CD4-positive, alpha-beta T cell (primary cell): ENCODE measurements at regions of chr1 and their contacts with region 1.

Region 1: GRCh38 chr1:84936116-84936810 is 43.3 kb upstream of the LPAR3 start:
- DNase-seq: peak in 9 of 14 experiments; percentile 6 to 80 (median 22)
- ATAC-seq: peak; percentile 79
- H3K4me3 ChIP-seq: no peak overlapping the region
- H3K4me3 Mint-ChIP-seq: no peak overlapping the region
- H3K27ac ChIP-seq: no peak overlapping the region
- H3K27ac Mint-ChIP-seq: no peak overlapping the region
- H3K4me1 ChIP-seq: peaks cover 3% of the 10 kb centered on the region
- H3K4me1 Mint-ChIP-seq: no peaks in the 10 kb centered on the region
- H3K27me3 ChIP-seq: no peaks in the 10 kb centered on the region
- H3K27me3 Mint-ChIP-seq: no peaks in the 10 kb centered on the region
- CTCF ChIP-seq: peak; percentile 97

Region 2: GRCh38 chr1:83931658-83932253 is 1004.5 kb before region 1 on chr1:
- CTCF ChIA-PET with region 1: no interaction called
- POLR2A ChIA-PET with region 1: no interaction called
- intact Hi-C with region 1: loop called (anchors 5 kb)
- DNase-seq: peak in 5 of 14 experiments; percentile 1 to 64 (median 64)
- ATAC-seq: peak; percentile 76
- H3K4me3 ChIP-seq: no peak overlapping the region
- H3K4me3 Mint-ChIP-seq: no peak overlapping the region
- H3K27ac ChIP-seq: no peak overlapping the region
- H3K27ac Mint-ChIP-seq: no peak overlapping the region
- H3K4me1 ChIP-seq: no peaks in the 10 kb centered on the region
- H3K4me1 Mint-ChIP-seq: no peaks in the 10 kb centered on the region
- H3K27me3 ChIP-seq: no peaks in the 10 kb centered on the region
- H3K27me3 Mint-ChIP-seq: peaks cover 4% of the 10 kb centered on the region
- CTCF ChIP-seq: peak; percentile 73

Region 3: DNA sequence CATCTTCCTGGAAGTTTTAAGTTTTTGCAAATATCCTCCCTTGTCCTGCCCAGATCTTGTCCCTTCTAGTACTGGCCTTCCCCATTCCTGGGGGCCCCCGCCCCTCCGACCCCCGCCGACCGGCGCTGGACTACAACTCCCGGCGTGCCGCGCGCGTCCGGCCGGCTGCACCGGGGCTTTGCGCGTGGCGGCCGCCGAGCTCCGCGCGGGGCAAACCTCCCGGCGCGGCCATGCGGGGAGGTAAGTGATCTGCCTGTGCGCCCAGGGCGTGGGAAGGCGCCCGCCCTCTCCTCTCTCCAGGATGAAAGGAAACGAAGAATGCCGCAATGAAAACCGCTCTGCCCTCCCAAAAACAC is 638.0 kb before region 1 on chr1:
- CTCF ChIA-PET with region 1: no interaction called
- POLR2A ChIA-PET with region 1: no interaction called
- intact Hi-C with region 1: loop called in 1 of 2 experiments (anchors 10 kb)
- DNase-seq: peak in 12 of 14 experiments; percentile 5 to 74 (median 44)
- ATAC-seq: peak; percentile 72
- H3K4me3 ChIP-seq: peak overlapping the region; percentile 82
- H3K4me3 Mint-ChIP-seq: peak overlapping the region; percentile 89
- H3K27ac ChIP-seq: no peak overlapping the region
- H3K27ac Mint-ChIP-seq: peak overlapping the region; percentile 37
- H3K4me1 ChIP-seq: peaks cover 24% of the 10 kb centered on the region
- H3K4me1 Mint-ChIP-seq: peaks cover 48% of the 10 kb centered on the region
- H3K27me3 ChIP-seq: peaks cover 0 to 9% of the 10 kb centered on the region in 2 experiments
- H3K27me3 Mint-ChIP-seq: peaks cover 12% of the 10 kb centered on the region
- CTCF ChIP-seq: no peak

Region 4: GRCh38 chr1:84620720-84621313 is 315.4 kb before region 1 on chr1:
- CTCF ChIA-PET with region 1: no interaction called
- POLR2A ChIA-PET with region 1: no interaction called
- intact Hi-C with region 1: loop called in 1 of 2 experiments (anchors 10 kb)
- DNase-seq: peak; percentile 50 to 88 (median 74)
- ATAC-seq: peak; percentile 92
- H3K4me3 ChIP-seq: peak overlapping the region; percentile 64
- H3K4me3 Mint-ChIP-seq: peak overlapping the region; percentile 95
- H3K27ac ChIP-seq: no peak overlapping the region
- H3K27ac Mint-ChIP-seq: no peak overlapping the region
- H3K4me1 ChIP-seq: peaks cover 8% of the 10 kb centered on the region
- H3K4me1 Mint-ChIP-seq: peaks cover 12% of the 10 kb centered on the region
- H3K27me3 ChIP-seq: no peaks in the 10 kb centered on the region
- H3K27me3 Mint-ChIP-seq: no peaks in the 10 kb centered on the region
- CTCF ChIP-seq: peak; percentile 100

Region 5: DNA sequence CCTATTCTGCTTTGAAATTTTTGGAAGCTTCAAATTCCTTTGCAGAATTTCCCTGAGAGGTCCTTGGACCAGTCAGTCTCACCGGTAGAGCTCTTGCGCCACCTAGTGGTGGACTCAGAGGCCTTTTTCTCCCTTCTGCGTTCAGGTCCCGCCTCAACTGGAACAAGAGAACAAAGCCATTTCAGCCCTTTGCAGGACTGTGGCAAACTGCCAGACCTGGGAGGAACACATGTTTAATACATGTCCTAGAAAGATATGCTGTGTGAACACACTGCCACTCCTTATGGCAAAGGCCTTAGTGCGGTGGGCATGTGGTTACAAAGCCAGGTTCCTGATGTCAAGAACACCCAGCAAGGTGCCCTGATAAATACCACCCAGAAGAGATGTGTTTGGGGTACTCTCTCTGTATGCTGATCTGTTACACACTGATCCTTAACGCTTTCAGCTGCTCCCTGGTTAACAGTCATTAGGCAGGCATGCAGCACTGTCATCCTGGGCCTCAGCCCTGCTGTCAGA is 163.8 kb before region 1 on chr1:
- CTCF ChIA-PET with region 1: interaction called, 5 read pairs
- POLR2A ChIA-PET with region 1: no interaction called
- intact Hi-C with region 1: loop called in 1 of 2 experiments (anchors 2 kb)
- DNase-seq: peak; percentile 50 to 86 (median 65)
- ATAC-seq: peak; percentile 73
- H3K4me3 ChIP-seq: no peak overlapping the region
- H3K4me3 Mint-ChIP-seq: no peak overlapping the region
- H3K27ac ChIP-seq: no peak overlapping the region
- H3K27ac Mint-ChIP-seq: no peak overlapping the region
- H3K4me1 ChIP-seq: peaks cover 5% of the 10 kb centered on the region
- H3K4me1 Mint-ChIP-seq: no peaks in the 10 kb centered on the region
- H3K27me3 ChIP-seq: no peaks in the 10 kb centered on the region
- H3K27me3 Mint-ChIP-seq: peaks cover 14% of the 10 kb centered on the region
- CTCF ChIP-seq: peak; percentile 99

Region 6: DNA sequence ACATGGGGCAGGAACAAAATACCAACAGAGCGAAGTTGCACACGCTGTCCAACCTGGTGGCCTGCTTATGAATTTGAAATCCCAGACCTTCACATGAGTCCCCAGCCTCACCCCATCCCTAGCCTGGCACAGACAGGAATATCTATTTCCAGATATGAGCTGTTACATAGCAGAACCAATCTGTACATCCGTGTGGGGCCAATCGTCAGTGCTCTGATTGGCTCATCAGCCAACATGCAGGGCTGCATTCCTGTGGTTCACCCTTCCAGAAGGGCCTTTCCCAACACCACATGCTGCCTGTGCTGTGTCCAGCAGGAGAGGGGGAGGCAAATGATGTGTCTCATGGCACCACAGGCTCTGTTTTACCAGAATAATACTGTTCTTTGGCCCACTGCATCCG is 675.6 kb after region 1 on chr1:
- CTCF ChIA-PET with region 1: no interaction called
- POLR2A ChIA-PET with region 1: no interaction called
- intact Hi-C with region 1: no loop called
- DNase-seq: no peak
- ATAC-seq: no peak
- H3K4me3 ChIP-seq: no peak overlapping the region
- H3K4me3 Mint-ChIP-seq: no peak overlapping the region
- H3K27ac ChIP-seq: no peak overlapping the region
- H3K27ac Mint-ChIP-seq: no peak overlapping the region
- H3K4me1 ChIP-seq: no peaks in the 10 kb centered on the region
- H3K4me1 Mint-ChIP-seq: no peaks in the 10 kb centered on the region
- H3K27me3 ChIP-seq: no peaks in the 10 kb centered on the region
- H3K27me3 Mint-ChIP-seq: no peaks in the 10 kb centered on the region
- CTCF ChIP-seq: no peak